ENCODE measurements at regions of chrX and their contacts with region 1.

Region 1: GRCh38 chrX:16123222-16123786 is at the start of gene GRPR:
- DNase-seq: peak; percentile 31 to 88 (median 76)
- H3K4me3 ChIP-seq: peak within 1 kb of the TSS in 1 of 59 donors; percentile 2
- H3K27ac ChIP-seq: no peak within 1 kb of the TSS
- H3K27me3 ChIP-seq: peaks cover 0 to 87% (median 22%) of the 10 kb centered on the region in 45 donors
- CTCF ChIP-seq: peak; percentile 38 to 84 (median 70)
- total RNA-seq, gene GRPR: 0.53 to 5.9 (median 1.7) TPM

Region 2: GRCh38 chrX:16368696-16369095 is 245.4 kb after region 1 on chrX:
- intact Hi-C with region 1: no loop called
- DNase-seq: no peak
- H3K4me3 ChIP-seq: no peak overlapping the region
- H3K27ac ChIP-seq: no peak overlapping the region
- H3K27me3 ChIP-seq: peaks cover 0 to 53% (median 13%) of the 10 kb centered on the region in 45 donors
- CTCF ChIP-seq: no peak

Region 3: DNA sequence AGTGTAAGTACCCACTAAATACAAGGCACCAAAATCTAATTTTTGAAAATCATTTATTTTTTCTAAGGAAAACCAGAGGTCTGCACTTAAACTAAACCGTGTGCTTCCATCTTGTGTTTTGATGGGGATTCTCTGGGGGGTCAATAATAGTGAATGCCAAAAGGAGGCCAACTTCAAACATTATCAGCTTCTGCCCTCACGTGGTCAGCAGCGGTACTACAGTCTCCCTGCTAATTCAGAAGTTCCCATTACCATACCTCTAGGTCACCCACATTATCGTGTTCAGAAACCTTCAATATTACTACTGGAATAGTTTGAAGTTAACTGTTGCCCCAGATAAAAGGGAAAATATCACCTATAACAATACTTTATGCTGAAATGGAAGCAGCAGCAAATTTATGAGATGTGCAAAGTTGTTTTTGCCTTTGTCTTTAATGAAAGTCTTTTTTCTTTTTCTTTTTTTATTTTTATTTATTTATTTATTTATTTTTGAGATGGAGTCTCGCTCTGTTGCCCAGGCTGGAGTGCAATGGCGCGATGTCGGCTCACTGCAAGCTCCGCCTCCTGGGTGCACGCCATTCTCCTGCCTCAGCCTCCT is 571.9 kb after region 1 on chrX:
- intact Hi-C with region 1: loop called in 1 of 2 experiments (anchors 10 kb)
- DNase-seq: peak in 9 of 10 donors; percentile 35 to 80 (median 64)
- H3K4me3 ChIP-seq: no peak overlapping the region
- H3K27ac ChIP-seq: no peak overlapping the region
- H3K27me3 ChIP-seq: peaks cover 0 to 60% (median 5%) of the 10 kb centered on the region in 45 donors
- CTCF ChIP-seq: peak; percentile 51 to 92 (median 86)

Measured in dorsolateral prefrontal cortex (tissue), 120 donors.